ENCODE measurements at regions of chr2 and their contacts with region 1.

Region 1: DNA sequence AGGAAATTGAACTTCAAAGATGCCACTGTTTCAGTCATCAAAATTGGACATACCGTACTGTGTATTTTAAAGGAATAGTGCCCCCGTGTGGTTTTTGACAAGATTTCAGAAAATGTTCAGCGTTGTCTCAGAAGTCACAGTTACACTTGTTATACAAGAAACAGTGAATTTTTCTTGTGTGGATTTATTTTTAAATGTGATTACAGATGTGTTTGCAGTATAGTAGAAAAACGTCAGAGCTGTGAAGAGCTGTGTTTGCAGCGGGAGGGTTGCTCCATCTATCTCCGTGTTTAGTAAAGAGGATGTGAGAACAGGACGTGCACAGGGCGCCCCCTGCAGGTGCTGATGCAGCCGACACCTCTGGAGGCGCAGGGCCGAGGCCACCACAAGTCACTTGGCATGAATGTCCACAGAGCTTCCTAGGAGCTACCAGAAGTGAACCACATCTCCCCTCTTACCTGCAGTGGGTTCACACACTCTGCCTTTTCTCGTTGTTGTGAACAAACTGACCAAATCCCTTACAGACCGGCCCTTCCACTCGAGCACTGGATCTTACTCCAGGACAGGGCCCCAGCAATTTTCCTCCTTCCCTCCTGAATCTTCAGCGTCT is 73.1 kb downstream of the CACNB4 start:
- DNase-seq: peak; percentile 40 to 85
- ATAC-seq: peak; percentile 98 to 99
- H3K4me3 ChIP-seq: peak overlapping the region; percentile 34
- H3K27ac ChIP-seq: no peak overlapping the region
- H3K4me1 ChIP-seq: no peaks in the 10 kb centered on the region
- CTCF ChIP-seq: peak; percentile 100
- EP300 ChIP-seq: no peak
- POLR2A ChIP-seq: no peak
- RAD21 ChIP-seq: peak; percentile 70 to 92

Region 2: DNA sequence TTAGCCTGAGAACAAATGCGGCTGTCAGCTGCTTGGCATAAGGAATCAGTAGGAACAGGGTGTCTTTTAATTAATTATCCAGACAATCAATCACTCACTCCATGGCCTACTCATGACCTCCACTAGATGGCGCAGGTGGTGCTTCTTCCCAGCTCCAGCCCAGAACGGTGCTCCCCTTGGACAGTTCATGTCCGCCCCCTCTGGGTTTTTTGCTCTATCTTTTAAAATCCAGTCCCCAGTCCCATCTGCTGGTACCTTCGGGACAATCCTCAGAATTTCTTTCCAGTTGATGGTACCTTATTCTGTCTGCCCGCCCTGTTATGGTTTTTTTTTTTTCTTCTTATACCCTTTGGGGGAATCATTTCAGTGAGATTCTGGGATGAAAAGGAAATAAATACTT is 26.7 kb before region 1 on chr2:
- CTCF ChIA-PET with region 1: interaction called, 27 read pairs
- POLR2A ChIA-PET with region 1: no interaction called
- DNase-seq: peak; percentile 65 to 66
- ATAC-seq: peak; percentile 89 to 98
- H3K4me3 ChIP-seq: no peak overlapping the region
- H3K27ac ChIP-seq: no peak overlapping the region
- H3K4me1 ChIP-seq: no peaks in the 10 kb centered on the region
- CTCF ChIP-seq: peak; percentile 73
- EP300 ChIP-seq: no peak
- POLR2A ChIP-seq: no peak
- RAD21 ChIP-seq: peak; percentile 49 to 60; a peak in 4 of 5 replicates

Region 3: DNA sequence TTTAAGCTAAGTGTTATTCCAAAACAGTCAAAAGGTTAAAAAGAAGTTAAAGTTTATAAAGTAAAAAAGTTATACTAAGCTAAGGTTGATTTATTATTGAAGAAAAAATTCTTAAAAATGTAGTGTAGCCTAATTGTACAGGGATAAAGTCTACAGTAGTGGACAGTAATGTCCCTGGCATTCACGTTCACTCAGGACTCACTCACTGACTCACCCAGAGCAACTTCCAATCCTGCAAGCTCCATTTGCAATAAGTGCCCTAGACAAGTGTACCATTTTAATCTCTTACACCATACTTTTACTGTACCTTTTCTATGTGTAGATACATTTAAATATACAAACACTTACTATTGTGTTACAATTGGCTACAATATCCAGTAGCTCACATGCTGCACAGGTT is 13.1 kb before region 1 on chr2:
- CTCF ChIA-PET with region 1: interaction called, 98 read pairs
- POLR2A ChIA-PET with region 1: no interaction called
- DNase-seq: no peak
- ATAC-seq: peak in 1 of 2 experiments; percentile 42; a peak in 2 of 6 replicates
- H3K4me3 ChIP-seq: no peak overlapping the region
- H3K27ac ChIP-seq: no peak overlapping the region
- H3K4me1 ChIP-seq: no peaks in the 10 kb centered on the region
- CTCF ChIP-seq: no peak
- EP300 ChIP-seq: no peak
- POLR2A ChIP-seq: no peak
- RAD21 ChIP-seq: no peak

Region 4: DNA sequence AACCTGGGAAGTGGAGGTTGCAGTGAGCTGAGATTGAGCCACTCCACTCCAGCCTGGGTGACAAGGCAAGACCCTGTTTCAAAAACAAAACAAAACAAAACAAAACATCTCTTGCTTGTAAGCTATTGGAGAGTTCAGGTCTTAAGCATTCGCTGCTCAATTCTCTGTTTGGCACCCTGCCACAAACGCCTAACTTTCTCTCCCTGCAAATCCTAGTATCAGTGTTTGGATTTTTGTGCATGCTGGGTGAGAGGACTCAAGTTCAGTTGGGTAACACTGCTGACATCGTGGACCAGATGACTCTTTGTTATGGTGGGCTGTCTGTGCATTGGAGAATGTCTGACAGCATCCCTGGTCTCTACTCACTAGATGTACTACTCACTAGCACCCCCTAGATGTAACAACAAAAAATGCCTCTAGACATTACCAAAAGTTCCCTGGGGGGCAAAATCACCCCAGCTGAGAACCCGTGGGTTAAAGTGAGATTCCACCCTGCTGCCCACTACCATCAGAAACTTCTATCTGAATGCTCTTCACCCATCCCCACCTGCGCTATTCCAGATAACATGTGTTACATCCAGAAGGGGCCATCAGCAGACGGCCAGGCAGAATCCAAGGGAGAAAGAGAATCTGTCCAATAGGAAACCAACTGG is 22.2 kb after region 1 on chr2:
- CTCF ChIA-PET with region 1: interaction called, 16 read pairs
- POLR2A ChIA-PET with region 1: no interaction called
- DNase-seq: no peak
- ATAC-seq: peak in 1 of 2 experiments; percentile 72; a peak in 3 of 6 replicates
- H3K4me3 ChIP-seq: no peak overlapping the region
- H3K27ac ChIP-seq: no peak overlapping the region
- H3K4me1 ChIP-seq: no peaks in the 10 kb centered on the region
- CTCF ChIP-seq: no peak; the same call in 1 of the 3 replicates
- EP300 ChIP-seq: no peak
- POLR2A ChIP-seq: no peak
- RAD21 ChIP-seq: no peak